ENCODE measurements at regions of chr1 and their contacts with region 1.

Region 1: DNA sequence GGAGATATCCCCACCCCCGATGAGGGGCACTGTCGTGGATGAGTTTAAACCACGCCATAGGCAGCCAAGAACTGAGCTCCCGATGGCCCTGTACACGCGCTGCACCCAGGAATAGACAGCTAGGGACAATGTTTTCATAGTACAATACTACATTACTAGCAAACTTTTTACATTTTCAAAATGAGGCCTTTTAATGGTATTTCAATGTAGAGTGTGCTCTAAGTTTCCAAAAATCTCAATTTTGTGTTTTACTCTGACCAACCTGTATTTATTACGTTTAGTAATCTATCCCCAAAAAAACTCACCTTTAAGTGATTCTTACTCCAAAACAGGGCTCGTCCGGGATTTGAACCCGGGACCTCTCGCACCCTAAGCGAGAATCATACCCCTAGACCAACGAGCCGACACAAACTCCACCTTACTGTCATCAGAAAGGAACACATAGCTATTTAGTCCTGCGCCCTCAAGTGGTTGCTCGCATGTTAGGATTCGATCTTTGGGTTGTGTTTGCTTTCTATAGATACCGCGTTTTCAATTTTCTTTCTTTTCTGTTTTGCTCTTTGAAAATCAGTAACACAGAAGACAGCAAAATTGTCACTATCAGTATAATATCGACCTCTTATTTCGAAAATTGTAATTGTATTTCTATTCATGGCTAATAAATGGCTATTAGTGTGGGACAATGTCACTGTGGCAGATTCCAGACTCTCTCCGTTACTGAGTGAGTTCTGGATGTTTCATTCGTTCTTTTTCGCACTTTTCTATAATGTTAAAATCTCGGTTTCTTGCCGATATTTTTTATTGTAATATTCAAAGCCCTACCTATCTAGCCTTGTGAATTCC is 6.4 kb upstream of the MPZL1 start:
- DNase-seq: peak; percentile 66 to 91 (median 89)
- ATAC-seq: peak; percentile 81
- H3K4me3 ChIP-seq: peak overlapping the region; percentile 88
- H3K4me3 Mint-ChIP-seq: peak overlapping the region; percentile 89 to 98 (median 93)
- H3K27ac ChIP-seq: peak overlapping the region; percentile 48
- H3K27ac Mint-ChIP-seq: peak overlapping the region; percentile 87 to 100 (median 98)
- H3K4me1 ChIP-seq: peaks cover 4 to 13% of the 10 kb centered on the region in 2 donors
- H3K4me1 Mint-ChIP-seq: peaks cover 26 to 53% (median 45%) of the 10 kb centered on the region in 7 donors
- H3K27me3 ChIP-seq: no peaks in the 10 kb centered on the region
- H3K27me3 Mint-ChIP-seq: peaks cover 0 to 16% (median 0%) of the 10 kb centered on the region in 5 donors

Region 2: GRCh38 chr1:166875734-166876539 is 839.4 kb before region 1 on chr1 and contains the start of gene TADA1:
- CTCF ChIA-PET with region 1: no interaction called
- POLR2A ChIA-PET with region 1: interaction called, 3 read pairs
- intact Hi-C with region 1: loop called in 1 of 2 experiments (anchors 2 kb)
- DNase-seq: peak; percentile 87 to 97 (median 96)
- ATAC-seq: peak; percentile 95
- H3K4me3 ChIP-seq: peak within 1 kb of the TSS; percentile 64
- H3K4me3 Mint-ChIP-seq: peak within 1 kb of the TSS; percentile 93 to 100 (median 96)
- H3K27ac ChIP-seq: peak within 1 kb of the TSS; percentile 83
- H3K27ac Mint-ChIP-seq: peak within 1 kb of the TSS; percentile 75 to 99 (median 98)
- H3K4me1 ChIP-seq: peaks cover 10 to 12% of the 10 kb centered on the region in 2 donors
- H3K4me1 Mint-ChIP-seq: peaks cover 43 to 63% (median 55%) of the 10 kb centered on the region in 7 donors
- H3K27me3 ChIP-seq: no peaks in the 10 kb centered on the region
- H3K27me3 Mint-ChIP-seq: peaks cover 0 to 11% (median 0%) of the 10 kb centered on the region in 5 donors
- total RNA-seq, gene TADA1: 9.4 to 16.2 (median 15.6) TPM

Region 3: GRCh38 chr1:167454894-167455785 is 260.2 kb before region 1 on chr1:
- CTCF ChIA-PET with region 1: no interaction called
- POLR2A ChIA-PET with region 1: interaction called, 11 read pairs
- intact Hi-C with region 1: loop called (anchors 5 to 10 kb)
- DNase-seq: peak; percentile 64 to 87 (median 83)
- ATAC-seq: peak; percentile 74
- H3K4me3 ChIP-seq: peak overlapping the region; percentile 91
- H3K4me3 Mint-ChIP-seq: peak overlapping the region; percentile 80 to 91 (median 87)
- H3K27ac ChIP-seq: peak overlapping the region; percentile 100
- H3K27ac Mint-ChIP-seq: peak overlapping the region; percentile 41 to 98 (median 93)
- H3K4me1 ChIP-seq: peaks cover 34 to 70% of the 10 kb centered on the region in 2 donors
- H3K4me1 Mint-ChIP-seq: peaks cover 37 to 86% (median 72%) of the 10 kb centered on the region in 7 donors
- H3K27me3 ChIP-seq: no peaks in the 10 kb centered on the region
- H3K27me3 Mint-ChIP-seq: no peaks in the 10 kb centered on the region

Region 4: GRCh38 chr1:167587872-167588271 is 127.5 kb before region 1 on chr1:
- CTCF ChIA-PET with region 1: no interaction called
- POLR2A ChIA-PET with region 1: no interaction called
- intact Hi-C with region 1: no loop called
- DNase-seq: no peak
- ATAC-seq: no peak
- H3K4me3 ChIP-seq: no peak overlapping the region
- H3K4me3 Mint-ChIP-seq: no peak overlapping the region
- H3K27ac ChIP-seq: no peak overlapping the region
- H3K27ac Mint-ChIP-seq: no peak overlapping the region
- H3K4me1 ChIP-seq: no peaks in the 10 kb centered on the region
- H3K4me1 Mint-ChIP-seq: peaks cover 0 to 4% (median 0%) of the 10 kb centered on the region in 7 donors
- H3K27me3 ChIP-seq: no peaks in the 10 kb centered on the region
- H3K27me3 Mint-ChIP-seq: peaks cover 0 to 9% (median 0%) of the 10 kb centered on the region in 5 donors

Region 5: DNA sequence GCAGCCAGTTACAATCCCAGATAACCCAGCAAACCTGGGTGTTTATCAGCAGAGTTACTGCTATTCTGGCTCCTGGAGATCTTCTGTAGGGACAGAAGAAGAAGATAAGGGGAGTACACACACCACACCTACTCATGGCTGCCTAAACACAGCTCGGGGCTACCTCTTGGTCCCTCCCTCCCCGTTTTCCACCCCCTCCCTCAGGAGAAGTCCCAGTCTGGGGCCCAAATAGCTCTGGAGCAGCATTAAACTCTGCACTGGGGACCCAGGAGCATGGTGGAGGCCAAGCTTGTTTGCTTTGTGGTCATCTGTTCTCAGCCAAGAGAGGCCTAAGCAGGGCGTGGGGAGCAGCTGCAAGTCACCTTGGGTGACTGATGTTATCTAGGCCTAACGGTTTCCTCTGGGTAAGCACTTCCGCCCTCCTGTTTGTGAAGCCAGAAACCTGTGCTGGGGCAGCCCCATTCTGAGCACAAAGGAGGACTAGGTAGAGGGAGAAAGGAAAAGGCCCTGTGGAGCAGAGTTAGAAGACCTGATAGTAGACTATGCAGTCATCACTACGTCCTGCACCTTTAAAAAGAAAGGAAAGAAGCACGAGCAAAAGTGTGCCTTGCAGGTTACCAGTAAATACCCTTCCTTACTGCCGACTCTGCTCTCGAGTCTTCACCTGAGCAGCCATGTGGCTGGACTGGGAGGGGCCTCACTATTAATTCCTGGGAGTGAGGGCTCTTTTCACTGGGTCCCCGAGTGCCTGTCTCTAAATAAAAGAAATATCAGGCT is 87.3 kb before region 1 on chr1:
- CTCF ChIA-PET with region 1: interaction called, 6 read pairs
- POLR2A ChIA-PET with region 1: interaction called, 6 read pairs
- intact Hi-C with region 1: loop called in 1 of 2 experiments (anchors 1 kb)
- DNase-seq: peak; percentile 33 to 84 (median 73)
- ATAC-seq: peak; percentile 84
- H3K4me3 ChIP-seq: peak overlapping the region; percentile 48
- H3K4me3 Mint-ChIP-seq: peak overlapping the region; percentile 82 to 99 (median 92)
- H3K27ac ChIP-seq: peak overlapping the region; percentile 94
- H3K27ac Mint-ChIP-seq: peak overlapping the region; percentile 85 to 98 (median 95)
- H3K4me1 ChIP-seq: peaks cover 44 to 46% of the 10 kb centered on the region in 2 donors
- H3K4me1 Mint-ChIP-seq: peaks cover 48 to 69% (median 63%) of the 10 kb centered on the region in 7 donors
- H3K27me3 ChIP-seq: no peaks in the 10 kb centered on the region
- H3K27me3 Mint-ChIP-seq: no peaks in the 10 kb centered on the region

Region 6: DNA sequence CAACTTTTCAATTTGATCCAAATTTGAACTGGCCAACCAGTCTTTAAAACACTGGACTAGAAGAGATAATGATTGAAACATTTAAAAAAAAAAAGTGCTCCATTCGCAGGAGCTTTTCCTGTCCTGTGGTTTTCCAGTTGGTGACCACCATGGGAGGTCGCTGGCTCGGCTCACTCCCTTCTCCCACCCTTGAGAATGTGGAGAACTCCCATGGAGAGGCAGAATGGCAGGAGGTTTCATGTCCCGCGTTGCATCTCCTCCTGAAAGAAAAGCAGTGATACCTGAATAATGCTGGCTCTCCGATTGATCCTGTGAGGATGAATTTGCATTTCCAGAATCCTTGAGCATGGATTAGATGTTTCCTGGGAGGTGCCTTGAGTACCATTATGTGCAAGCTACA is 10.1 kb before region 1 on chr1:
- CTCF ChIA-PET with region 1: interaction called, 6 read pairs
- POLR2A ChIA-PET with region 1: interaction called, 6 read pairs
- intact Hi-C with region 1: loop called in 1 of 2 experiments (anchors 1 kb)
- DNase-seq: peak in 1 of 9 donors; percentile 11
- ATAC-seq: no peak
- H3K4me3 ChIP-seq: no peak overlapping the region
- H3K4me3 Mint-ChIP-seq: no peak overlapping the region
- H3K27ac ChIP-seq: peak overlapping the region; percentile 11
- H3K27ac Mint-ChIP-seq: peak overlapping the region in 5 of 9 donors; percentile 19 to 78 (median 64)
- H3K4me1 ChIP-seq: no peaks in the 10 kb centered on the region
- H3K4me1 Mint-ChIP-seq: peaks cover 10 to 26% (median 20%) of the 10 kb centered on the region in 7 donors
- H3K27me3 ChIP-seq: no peaks in the 10 kb centered on the region
- H3K27me3 Mint-ChIP-seq: no peaks in the 10 kb centered on the region

Region 7: GRCh38 chr1:167837326-167837725 is 121.9 kb after region 1 on chr1:
- CTCF ChIA-PET with region 1: no interaction called
- POLR2A ChIA-PET with region 1: no interaction called
- intact Hi-C with region 1: no loop called
- DNase-seq: no peak
- ATAC-seq: no peak
- H3K4me3 ChIP-seq: no peak overlapping the region
- H3K4me3 Mint-ChIP-seq: no peak overlapping the region
- H3K27ac ChIP-seq: no peak overlapping the region
- H3K27ac Mint-ChIP-seq: no peak overlapping the region
- H3K4me1 ChIP-seq: no peaks in the 10 kb centered on the region
- H3K4me1 Mint-ChIP-seq: peaks cover 0 to 7% (median 0%) of the 10 kb centered on the region in 7 donors
- H3K27me3 ChIP-seq: no peaks in the 10 kb centered on the region
- H3K27me3 Mint-ChIP-seq: peaks cover 0 to 16% (median 3%) of the 10 kb centered on the region in 5 donors

Region 8: GRCh38 chr1:168082008-168082876 is 366.9 kb after region 1 on chr1:
- CTCF ChIA-PET with region 1: interaction called, 3 read pairs
- POLR2A ChIA-PET with region 1: no interaction called
- intact Hi-C with region 1: loop called (anchors 5 kb)
- DNase-seq: peak in 8 of 9 donors; percentile 29 to 66 (median 48)
- ATAC-seq: peak; percentile 83
- H3K4me3 ChIP-seq: no peak overlapping the region
- H3K4me3 Mint-ChIP-seq: no peak overlapping the region
- H3K27ac ChIP-seq: no peak overlapping the region
- H3K27ac Mint-ChIP-seq: peak overlapping the region in 1 of 9 donors; percentile 54
- H3K4me1 ChIP-seq: no peaks in the 10 kb centered on the region
- H3K4me1 Mint-ChIP-seq: peaks cover 0 to 12% (median 0%) of the 10 kb centered on the region in 7 donors
- H3K27me3 ChIP-seq: no peaks in the 10 kb centered on the region
- H3K27me3 Mint-ChIP-seq: no peaks in the 10 kb centered on the region